ENCODE measurements at regions of chr6 and their contacts with region 1.

Region 1: DNA sequence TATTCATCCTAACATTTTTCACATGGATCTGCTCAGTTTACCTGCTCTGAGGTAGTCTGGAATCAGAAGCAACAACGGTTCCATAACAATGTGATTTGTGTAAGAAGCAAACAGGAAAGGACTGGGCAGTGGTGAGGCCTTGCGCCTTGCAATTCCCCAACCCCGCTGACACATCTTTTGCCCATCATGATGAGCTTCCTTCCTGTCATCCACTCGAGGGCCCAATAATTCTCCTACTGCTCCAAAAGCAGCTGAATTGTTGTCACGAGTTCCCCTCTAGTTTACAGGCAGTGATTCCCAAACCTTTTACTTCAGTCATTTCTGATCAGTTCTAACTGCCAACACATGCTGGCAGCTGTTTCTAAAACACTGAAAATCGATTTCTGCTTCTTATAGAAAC is 22.9 kb downstream of the STX7 start:
- DNase-seq: peak in 1 of 2 donors; percentile 20
- ATAC-seq: peak; percentile 47 to 83 (median 71)
- H3K4me3 ChIP-seq: peak overlapping the region in 1 of 10 donors; percentile 27
- H3K27ac ChIP-seq: peak overlapping the region in 6 of 10 donors; percentile 26 to 78 (median 56)
- H3K4me1 ChIP-seq: peaks cover 3 to 44% (median 31%) of the 10 kb centered on the region in 9 donors
- H3K27me3 ChIP-seq: no peaks in the 10 kb centered on the region
- CTCF ChIP-seq: no peak

Region 2: GRCh38 chr6:131782764-131783163 is 707.3 kb before region 1 on chr6:
- intact Hi-C with region 1: no loop called
- DNase-seq: no peak
- ATAC-seq: no peak
- H3K4me3 ChIP-seq: no peak overlapping the region
- H3K27ac ChIP-seq: no peak overlapping the region
- H3K4me1 ChIP-seq: peaks cover 0 to 7% (median 0%) of the 10 kb centered on the region in 9 donors
- H3K27me3 ChIP-seq: no peaks in the 10 kb centered on the region
- CTCF ChIP-seq: peak in 2 of 9 donors; percentile 8 to 16

Region 3: GRCh38 chr6:132505158-132505557 is 15.1 kb after region 1 on chr6:
- intact Hi-C with region 1: loop called in 1 of 10 experiments (anchors 2 kb)
- DNase-seq: no peak
- ATAC-seq: peak in 2 of 8 donors; percentile 16 to 52
- H3K4me3 ChIP-seq: no peak overlapping the region
- H3K27ac ChIP-seq: no peak overlapping the region
- H3K4me1 ChIP-seq: peaks cover 5 to 62% (median 45%) of the 10 kb centered on the region in 9 donors
- H3K27me3 ChIP-seq: no peaks in the 10 kb centered on the region
- CTCF ChIP-seq: no peak